ENCODE measurements at regions of chr11 and their contacts with region 1.

Region 1: DNA sequence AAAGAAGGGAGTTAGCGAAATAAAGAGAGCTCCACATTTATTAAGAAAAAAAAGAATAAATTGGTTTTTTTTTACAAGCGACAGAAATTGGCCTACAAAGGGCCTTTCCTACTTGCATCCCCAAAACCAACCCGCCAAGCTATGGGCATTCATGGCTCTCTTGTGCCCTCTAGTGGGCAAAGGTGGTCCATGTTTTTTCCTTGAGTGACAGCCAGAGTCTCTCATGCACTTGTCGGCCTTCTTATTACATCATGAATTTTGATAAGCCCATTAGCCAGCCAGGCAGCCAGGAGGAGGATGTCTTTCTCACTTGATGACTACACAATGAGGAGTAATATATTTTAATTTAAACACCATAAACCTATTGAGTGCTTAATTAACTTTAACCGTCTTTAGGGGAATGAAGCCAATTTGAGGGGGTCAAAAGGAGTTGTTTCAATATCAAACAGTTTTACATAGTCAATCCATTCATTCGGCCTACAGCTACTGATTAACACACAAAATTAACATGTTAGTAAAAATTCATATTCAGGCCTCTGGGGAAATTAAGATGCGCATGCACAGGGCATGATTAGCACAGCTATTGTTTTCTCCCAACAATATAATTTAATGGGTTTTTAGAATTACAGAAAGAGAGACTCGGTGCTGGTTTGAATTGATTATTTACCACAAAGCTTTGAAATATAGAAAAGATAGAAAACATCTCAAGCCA is 85.5 kb downstream of the RCN1 start:
- DNase-seq: peak; percentile 50 to 64
- ATAC-seq: peak; percentile 74 to 89 (median 82)
- H3K4me3 ChIP-seq: no peak overlapping the region
- H3K27ac ChIP-seq: no peak overlapping the region
- H3K4me1 ChIP-seq: no peaks in the 10 kb centered on the region
- H3K27me3 ChIP-seq: peaks cover 0 to 13% (median 2%) of the 10 kb centered on the region in 3 donors
- CTCF ChIP-seq: peak; percentile 91

Region 2: DNA sequence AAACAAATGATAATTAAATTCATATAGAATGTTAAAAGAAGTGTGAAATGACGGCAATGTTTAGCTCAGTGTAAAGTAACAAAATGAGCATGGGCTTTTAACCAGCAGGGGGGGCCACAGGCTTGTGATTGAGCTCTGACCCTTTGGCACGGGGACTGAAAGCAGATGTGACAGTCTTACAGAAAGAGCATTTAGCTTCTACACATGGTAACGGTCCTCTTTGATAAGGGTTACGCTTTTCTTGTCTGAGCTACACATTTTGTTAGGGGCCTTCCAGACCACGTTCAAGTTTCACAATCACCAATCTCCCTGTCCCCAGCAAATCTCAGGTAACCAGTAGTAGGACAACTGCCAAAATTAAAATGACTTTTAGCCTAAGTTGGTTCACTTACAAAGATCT is 1069.3 kb before region 1 on chr11:
- intact Hi-C with region 1: loop called (anchors 10 kb)
- DNase-seq: peak; percentile 17 to 59
- ATAC-seq: peak in 2 of 4 donors; percentile 51 to 79
- H3K4me3 ChIP-seq: no peak overlapping the region
- H3K27ac ChIP-seq: no peak overlapping the region
- H3K4me1 ChIP-seq: no peaks in the 10 kb centered on the region
- H3K27me3 ChIP-seq: no peaks in the 10 kb centered on the region
- CTCF ChIP-seq: peak; percentile 47

Region 3: GRCh38 chr11:31240338-31240904 is 936.0 kb before region 1 on chr11:
- intact Hi-C with region 1: loop called in 1 of 2 experiments (anchors 10 kb)
- DNase-seq: no peak
- ATAC-seq: peak in 1 of 4 donors; percentile 75
- H3K4me3 ChIP-seq: no peak overlapping the region
- H3K27ac ChIP-seq: no peak overlapping the region
- H3K4me1 ChIP-seq: no peaks in the 10 kb centered on the region
- H3K27me3 ChIP-seq: no peaks in the 10 kb centered on the region
- CTCF ChIP-seq: peak; percentile 52

Region 4: GRCh38 chr11:32052218-32052617 is 124.2 kb before region 1 on chr11:
- intact Hi-C with region 1: loop called (anchors 1 to 2 kb)
- DNase-seq: peak; percentile 27 to 58
- ATAC-seq: peak in 2 of 4 donors; percentile 30 to 76
- H3K4me3 ChIP-seq: no peak overlapping the region
- H3K27ac ChIP-seq: no peak overlapping the region
- H3K4me1 ChIP-seq: no peaks in the 10 kb centered on the region
- H3K27me3 ChIP-seq: no peaks in the 10 kb centered on the region
- CTCF ChIP-seq: peak; percentile 78

Measured in psoas muscle (tissue), 8 donors.